Posterior vena cava (tissue), 2 donors: ENCODE measurements at regions of chr19 and their contacts with region 1.

Region 1: GRCh38 chr19:51460164-51460992 is 2.1 kb upstream of the SIGLEC8 start:
- DNase-seq: peak; percentile 72

Region 2: DNA sequence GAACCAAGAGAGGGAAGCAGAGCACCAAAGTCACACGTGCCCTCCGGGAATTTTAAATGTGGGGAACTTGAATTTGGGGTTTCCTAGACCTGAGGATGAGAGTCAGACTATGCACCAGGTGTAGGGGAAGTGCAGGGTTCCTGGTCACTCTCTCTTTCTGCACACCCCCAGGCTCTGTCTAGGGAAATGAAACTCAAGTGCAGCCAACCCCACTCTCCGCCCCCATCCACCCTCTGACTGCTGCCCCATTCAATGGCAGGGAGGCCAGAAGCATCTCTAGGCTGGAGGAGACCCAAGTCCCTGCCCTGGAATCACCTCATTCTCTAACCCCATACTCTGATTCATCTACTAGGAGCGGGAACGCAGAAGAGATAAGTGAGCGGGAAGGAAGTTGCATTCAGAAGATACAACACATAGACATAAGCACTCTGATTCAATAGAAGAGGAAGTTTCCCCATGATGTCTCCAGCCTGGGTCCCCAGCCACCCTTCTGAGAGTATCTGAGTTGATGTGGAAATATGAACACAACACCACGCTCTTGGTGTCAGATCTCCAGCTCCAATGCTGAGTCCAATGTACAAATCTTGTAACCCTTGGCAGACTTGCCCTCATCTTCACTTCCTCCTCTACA is 191.0 kb after region 1 on chr19:
- intact Hi-C with region 1: loop called in 1 of 2 experiments (anchors 10 kb)
- DNase-seq: no peak

Region 3: GRCh38 chr19:53333463-53334449 is 1873.4 kb after region 1 on chr19 and contains the start of gene ZNF845:
- intact Hi-C with region 1: loop called in 1 of 2 experiments (anchors 5 kb)
- DNase-seq: peak; percentile 99
- total RNA-seq, gene ZNF845: 6.6 to 6.7 TPM